ENCODE measurements at regions of chr3 and their contacts with region 1.

Region 1: DNA sequence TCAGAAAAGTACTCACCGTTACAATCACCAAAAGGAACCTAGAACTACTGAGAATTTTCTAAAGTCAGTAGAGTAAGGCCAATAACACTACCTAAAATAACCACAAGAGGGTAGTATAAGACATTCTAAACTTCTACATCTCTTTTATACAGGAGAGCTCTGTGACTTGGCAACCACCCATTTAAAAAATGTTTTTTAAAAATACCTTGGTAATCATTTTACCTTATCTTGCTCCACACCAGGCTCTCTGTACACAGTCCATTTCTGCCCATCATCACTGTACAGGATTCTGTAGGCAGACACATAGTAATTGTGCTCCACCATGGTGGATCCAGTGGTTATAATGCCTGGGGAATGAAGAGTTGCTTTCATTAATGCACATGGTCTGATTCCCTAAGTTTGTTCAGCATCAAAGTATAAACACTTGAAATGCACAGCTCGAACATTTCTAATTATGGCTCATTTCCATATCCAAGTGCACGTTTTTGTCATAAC is 54.5 kb downstream of the ST3GAL6 start:
- DNase-seq: no peak
- ATAC-seq: peak; percentile 96
- H3K4me3 ChIP-seq: no peak overlapping the region
- H3K27ac ChIP-seq: no peak overlapping the region
- H3K4me1 ChIP-seq: no peaks in the 10 kb centered on the region
- H3K27me3 ChIP-seq: no peaks in the 10 kb centered on the region
- CTCF ChIP-seq: peak; percentile 47 to 64 (median 61); a peak in 5 of 6 replicates
- EP300 ChIP-seq: no peak
- POLR2A ChIP-seq: no peak
- RAD21 ChIP-seq: peak; percentile 73

Region 2: GRCh38 chr3:98136631-98137030 is 681.0 kb before region 1 on chr3:
- CTCF ChIA-PET with region 1: no interaction called
- POLR2A ChIA-PET with region 1: no interaction called
- RAD21 ChIA-PET with region 1: no interaction called
- SMC1A ChIA-PET with region 1: no interaction called
- in situ Hi-C with region 1: no loop called
- intact Hi-C with region 1: no loop called
- DNase-seq: no peak
- ATAC-seq: no peak
- H3K4me3 ChIP-seq: no peak overlapping the region
- H3K27ac ChIP-seq: no peak overlapping the region
- H3K4me1 ChIP-seq: no peaks in the 10 kb centered on the region; the same call in 1 of the 2 replicates
- H3K27me3 ChIP-seq: no peaks in the 10 kb centered on the region
- CTCF ChIP-seq: no peak
- EP300 ChIP-seq: no peak
- POLR2A ChIP-seq: no peak
- RAD21 ChIP-seq: no peak

Region 3: DNA sequence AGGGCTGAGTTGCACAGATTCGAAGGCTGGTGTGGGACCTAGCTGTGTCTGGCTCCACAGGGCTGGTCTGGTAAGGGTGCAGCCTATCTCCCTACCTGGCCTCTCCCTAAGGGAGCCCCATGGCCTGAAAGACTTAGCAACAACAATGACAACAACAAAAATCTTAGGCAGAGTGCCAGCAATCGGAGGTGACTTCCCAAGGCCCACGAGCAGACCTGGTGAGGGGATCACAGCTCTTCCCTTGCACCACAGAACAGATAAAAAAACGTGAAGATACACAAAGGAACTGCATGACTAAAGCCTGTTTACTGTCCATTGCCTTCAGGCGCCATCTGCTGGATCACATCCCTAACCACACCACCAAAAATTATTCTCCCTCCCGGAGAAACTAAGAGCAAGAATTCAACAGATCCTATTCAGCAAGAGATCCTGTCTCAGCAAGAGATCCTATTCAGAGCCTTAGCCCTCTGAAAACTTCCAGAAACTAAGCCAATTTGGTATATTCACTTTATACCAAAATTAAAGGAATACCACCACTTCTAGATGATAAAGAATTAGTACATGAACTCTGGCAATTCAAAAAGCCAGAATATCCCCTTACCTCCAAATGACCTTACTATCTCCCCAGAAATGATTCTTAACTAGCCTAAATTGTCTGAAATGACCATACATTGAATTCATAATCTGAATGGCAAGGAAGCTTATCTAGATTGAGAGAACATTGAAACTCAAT is 488.0 kb before region 1 on chr3:
- CTCF ChIA-PET with region 1: no interaction called
- POLR2A ChIA-PET with region 1: no interaction called
- RAD21 ChIA-PET with region 1: no interaction called
- SMC1A ChIA-PET with region 1: interaction called, 4 read pairs
- in situ Hi-C with region 1: loop called (anchors 25 kb)
- intact Hi-C with region 1: no loop called
- DNase-seq: peak; percentile 27
- ATAC-seq: peak; percentile 75
- H3K4me3 ChIP-seq: no peak overlapping the region
- H3K27ac ChIP-seq: no peak overlapping the region
- H3K4me1 ChIP-seq: peaks cover 5% of the 10 kb centered on the region
- H3K27me3 ChIP-seq: no peaks in the 10 kb centered on the region
- CTCF ChIP-seq: peak; percentile 78 to 92 (median 80)
- EP300 ChIP-seq: no peak
- POLR2A ChIP-seq: no peak
- RAD21 ChIP-seq: peak; percentile 89

Region 4: GRCh38 chr3:98593046-98593936 is 224.3 kb before region 1 on chr3 and contains the start of gene CPOX:
- CTCF ChIA-PET with region 1: interaction called, 120 read pairs
- POLR2A ChIA-PET with region 1: no interaction called
- RAD21 ChIA-PET with region 1: interaction called, 53 read pairs
- SMC1A ChIA-PET with region 1: interaction called, 408 read pairs
- in situ Hi-C with region 1: no loop called
- intact Hi-C with region 1: no loop called
- DNase-seq: peak; percentile 76
- ATAC-seq: peak; percentile 96
- H3K4me3 ChIP-seq: peak within 1 kb of the TSS; percentile 81
- H3K27ac ChIP-seq: peak within 1 kb of the TSS; percentile 84
- H3K4me1 ChIP-seq: peaks cover 7% of the 10 kb centered on the region
- H3K27me3 ChIP-seq: no peaks in the 10 kb centered on the region
- CTCF ChIP-seq: no peak
- EP300 ChIP-seq: no peak
- POLR2A ChIP-seq: peak; percentile 76
- RAD21 ChIP-seq: 0 out of 2 replicates have a peak, but pooled peaks have one; percentile 1
- polyA plus RNA-seq, gene CPOX: 40.7 to 45.8 TPM

Region 5: DNA sequence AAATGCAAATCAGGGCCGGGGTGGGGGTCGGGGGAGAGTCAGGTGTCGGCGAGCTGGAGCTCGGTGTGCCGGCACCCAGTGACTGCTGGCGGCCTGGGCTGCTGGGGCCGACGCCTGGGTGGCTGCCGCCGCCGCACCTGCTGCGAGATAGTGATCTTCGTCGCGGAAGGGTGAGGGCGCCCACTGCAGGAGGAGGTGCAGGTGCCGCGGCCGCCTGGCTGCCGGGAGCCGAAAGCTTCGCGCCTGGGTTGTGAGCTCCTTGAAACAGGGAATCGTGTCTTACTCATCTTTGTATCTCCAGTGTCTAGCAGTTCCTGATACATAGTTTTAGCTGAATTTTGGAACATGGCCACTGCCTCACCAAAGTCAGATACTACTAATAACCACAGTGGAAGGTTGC is 160.1 kb before region 1 on chr3:
- CTCF ChIA-PET with region 1: interaction called, 5 read pairs
- POLR2A ChIA-PET with region 1: no interaction called
- RAD21 ChIA-PET with region 1: no interaction called
- SMC1A ChIA-PET with region 1: interaction called, 5 read pairs
- in situ Hi-C with region 1: no loop called
- intact Hi-C with region 1: loop called (anchors 5 kb)
- DNase-seq: no peak
- ATAC-seq: peak; percentile 98
- H3K4me3 ChIP-seq: no peak overlapping the region; the same call in 1 of the 2 replicates
- H3K27ac ChIP-seq: no peak overlapping the region
- H3K4me1 ChIP-seq: peaks cover 3% of the 10 kb centered on the region
- H3K27me3 ChIP-seq: no peaks in the 10 kb centered on the region
- CTCF ChIP-seq: peak; percentile 62 to 71 (median 70)
- EP300 ChIP-seq: no peak
- POLR2A ChIP-seq: no peak
- RAD21 ChIP-seq: peak; percentile 73

Region 6: DNA sequence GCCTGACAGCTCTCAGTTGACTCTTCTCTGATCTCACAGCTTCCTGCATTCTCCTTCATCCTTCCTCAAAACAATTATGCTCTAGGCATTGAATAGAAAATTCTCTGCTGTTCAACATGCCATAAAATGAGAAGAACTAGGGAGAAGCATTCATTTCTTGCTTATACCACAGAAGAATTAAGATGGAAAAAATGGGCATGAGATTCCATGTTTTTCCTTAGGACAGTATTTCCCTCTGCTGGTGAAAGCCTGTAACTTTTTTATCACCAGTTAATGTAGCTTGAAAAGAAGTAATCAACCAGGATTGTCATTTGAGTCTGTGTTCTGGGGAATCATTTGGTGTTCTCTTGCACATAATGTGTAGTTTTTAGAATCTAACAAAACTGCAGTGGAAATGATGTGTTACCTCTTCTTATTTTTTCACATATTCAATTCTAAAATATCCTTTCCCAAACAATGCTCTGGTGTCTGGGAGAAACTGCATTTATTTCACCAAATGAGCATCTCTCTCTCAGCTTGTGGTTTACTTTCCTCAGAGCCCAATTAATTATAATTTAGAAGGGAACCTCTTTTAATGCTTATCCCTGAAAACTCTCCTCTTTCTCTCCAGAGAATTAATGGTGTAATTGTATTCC is 176.7 kb after region 1 on chr3:
- CTCF ChIA-PET with region 1: interaction called, 49 read pairs
- POLR2A ChIA-PET with region 1: no interaction called
- RAD21 ChIA-PET with region 1: interaction called, 35 read pairs
- SMC1A ChIA-PET with region 1: interaction called, 24 read pairs
- in situ Hi-C with region 1: loop called (anchors 5 kb)
- intact Hi-C with region 1: loop called (anchors 1 kb)
- DNase-seq: no peak
- ATAC-seq: no peak
- H3K4me3 ChIP-seq: no peak overlapping the region
- H3K27ac ChIP-seq: no peak overlapping the region
- H3K4me1 ChIP-seq: no peaks in the 10 kb centered on the region
- H3K27me3 ChIP-seq: no peaks in the 10 kb centered on the region; a peak in 1 of 4 replicates
- CTCF ChIP-seq: peak; percentile 36 to 54 (median 47); a peak in 5 of 6 replicates
- EP300 ChIP-seq: no peak
- POLR2A ChIP-seq: no peak
- RAD21 ChIP-seq: peak; percentile 60

Region 7: DNA sequence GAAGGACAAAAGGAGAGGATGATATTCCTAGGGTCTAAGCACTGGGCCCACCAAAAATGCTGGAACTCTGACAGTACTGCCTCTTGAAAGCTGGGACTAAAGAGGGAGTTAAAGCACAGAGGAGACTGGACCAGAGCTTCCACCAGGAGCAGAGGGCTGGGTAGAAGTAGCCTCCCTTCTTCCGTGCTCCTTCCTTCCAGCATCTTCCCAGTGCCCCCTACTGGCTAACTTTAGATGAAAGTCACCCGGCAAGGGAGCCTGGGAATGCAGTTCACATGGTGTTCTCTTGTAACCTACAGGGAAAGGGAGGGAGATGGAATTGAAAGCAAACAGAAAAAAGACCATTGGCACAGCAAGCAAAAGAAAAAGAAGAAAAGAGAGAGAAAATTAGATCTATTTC is 714.7 kb after region 1 on chr3:
- CTCF ChIA-PET with region 1: interaction called, 5 read pairs
- POLR2A ChIA-PET with region 1: no interaction called
- RAD21 ChIA-PET with region 1: interaction called, 3 read pairs
- SMC1A ChIA-PET with region 1: interaction called, 3 read pairs
- in situ Hi-C with region 1: no loop called
- intact Hi-C with region 1: loop called (anchors 10 kb)
- DNase-seq: no peak
- ATAC-seq: peak; percentile 84
- H3K4me3 ChIP-seq: no peak overlapping the region
- H3K27ac ChIP-seq: no peak overlapping the region
- H3K4me1 ChIP-seq: no peaks in the 10 kb centered on the region
- H3K27me3 ChIP-seq: no peaks in the 10 kb centered on the region
- CTCF ChIP-seq: peak; percentile 57 to 82 (median 78)
- EP300 ChIP-seq: no peak
- POLR2A ChIP-seq: no peak
- RAD21 ChIP-seq: peak; percentile 89

Region 8: GRCh38 chr3:99753268-99753975 is 935.8 kb after region 1 on chr3:
- CTCF ChIA-PET with region 1: interaction called, 14 read pairs
- POLR2A ChIA-PET with region 1: no interaction called
- RAD21 ChIA-PET with region 1: interaction called, 4 read pairs
- SMC1A ChIA-PET with region 1: interaction called, 5 read pairs
- in situ Hi-C with region 1: loop called (anchors 5 kb)
- intact Hi-C with region 1: loop called (anchors 5 kb)
- DNase-seq: peak; percentile 40
- ATAC-seq: peak; percentile 87
- H3K4me3 ChIP-seq: no peak overlapping the region
- H3K27ac ChIP-seq: no peak overlapping the region
- H3K4me1 ChIP-seq: no peaks in the 10 kb centered on the region
- H3K27me3 ChIP-seq: no peaks in the 10 kb centered on the region
- CTCF ChIP-seq: peak; percentile 65 to 80 (median 71); a peak in 5 of 6 replicates
- EP300 ChIP-seq: no peak
- POLR2A ChIP-seq: no peak
- RAD21 ChIP-seq: peak; percentile 91

Measured in GM12878 (cell line).